Mucosa of descending colon (tissue), 3 donors: ENCODE measurements at regions of chr21 and their contacts with region 1.

Region 1: GRCh38 chr21:33924079-33924765 is 8.6 kb upstream of the ATP5PO start:
- DNase-seq: peak; percentile 88 to 96 (median 91)
- ATAC-seq: peak; percentile 99
- H3K4me3 ChIP-seq: no peak overlapping the region
- H3K4me1 ChIP-seq: no peaks in the 10 kb centered on the region
- CTCF ChIP-seq: peak; percentile 76

Region 2: GRCh38 chr21:34243562-34243961 is 319.3 kb after region 1 on chr21:
- intact Hi-C with region 1: loop called in 1 of 2 experiments (anchors 5 kb)
- DNase-seq: peak in 1 of 3 donors; percentile 51
- ATAC-seq: peak; percentile 61
- H3K4me3 ChIP-seq: no peak overlapping the region
- H3K4me1 ChIP-seq: no peaks in the 10 kb centered on the region
- CTCF ChIP-seq: peak; percentile 12

Region 3: GRCh38 chr21:34345091-34345871 is 421.1 kb after region 1 on chr21:
- intact Hi-C with region 1: loop called (anchors 2 to 5 kb)
- DNase-seq: no peak
- ATAC-seq: no peak
- H3K4me3 ChIP-seq: no peak overlapping the region
- H3K4me1 ChIP-seq: no peaks in the 10 kb centered on the region
- CTCF ChIP-seq: no peak